ENCODE measurements at regions of chr3 and their contacts with region 1.

Region 1: DNA sequence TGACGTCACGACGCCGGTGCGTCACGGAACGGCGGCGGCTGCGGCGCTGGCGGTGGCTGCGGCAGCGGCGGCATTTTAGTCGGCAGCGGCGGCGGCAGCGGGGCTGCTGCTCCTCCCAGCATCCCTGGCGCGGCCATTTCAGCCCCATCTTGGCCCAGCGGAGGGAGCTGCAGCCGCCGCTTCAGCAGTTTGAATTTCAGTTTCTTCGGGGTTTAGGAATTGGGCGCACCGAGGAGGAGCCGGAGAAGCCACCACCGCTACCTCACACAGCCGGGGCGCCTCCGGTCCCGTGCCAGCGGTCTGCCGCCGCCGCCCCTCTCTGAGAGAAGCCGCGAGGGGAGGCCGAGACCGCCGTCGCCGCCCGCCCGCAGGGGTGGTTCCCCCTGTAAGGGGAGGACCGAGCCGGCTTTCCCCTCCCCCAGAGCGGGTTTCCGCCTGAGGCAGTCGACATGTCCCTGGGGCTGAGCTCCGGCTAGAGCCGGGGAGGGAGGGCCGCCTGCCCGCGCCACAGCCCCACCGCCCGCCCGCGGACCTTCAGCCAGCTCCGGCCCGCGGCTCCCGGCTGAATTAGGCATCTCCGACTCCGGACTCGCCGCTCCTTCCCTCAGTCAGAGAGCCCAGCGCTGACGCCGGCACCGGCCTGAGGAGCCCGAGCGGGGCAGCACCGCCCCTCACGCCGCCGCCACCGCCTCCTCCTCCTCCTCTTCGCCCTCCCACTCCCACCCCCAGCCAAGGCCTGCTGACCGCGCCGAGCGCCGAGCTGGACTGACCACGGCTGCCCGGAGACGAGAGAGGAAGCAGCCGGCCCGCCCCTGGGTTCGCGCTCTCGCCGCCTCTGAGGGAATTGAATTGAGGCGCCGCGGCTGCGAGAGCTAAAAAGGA is at the start of gene TSC22D2:
- DNase-seq: peak; percentile 98
- H3K4me3 ChIP-seq: peak within 1 kb of the TSS; percentile 67 to 93 (median 76)
- H3K27ac ChIP-seq: peak within 1 kb of the TSS; percentile 93 to 100 (median 98)
- H3K4me1 ChIP-seq: peaks cover under 1 to 35% (median 26%) of the 10 kb centered on the region in 4 donors
- H3K27me3 ChIP-seq: no peaks in the 10 kb centered on the region
- CTCF ChIP-seq: peak in 2 of 3 experiments; percentile 1 to 25
- EP300 ChIP-seq: no peak
- POLR2A ChIP-seq: peak; percentile 94
- total RNA-seq, gene TSC22D2: 19.1 to 27.1 (median 21.2) TPM

Region 2: GRCh38 chr3:149969940-149970715 is 438.3 kb before region 1 on chr3:
- intact Hi-C with region 1: loop called (anchors 10 kb)
- DNase-seq: no peak
- H3K4me3 ChIP-seq: peak overlapping the region; percentile 93 to 98 (median 96)
- H3K27ac ChIP-seq: peak overlapping the region; percentile 95 to 98 (median 98)
- H3K4me1 ChIP-seq: peaks cover 14 to 44% (median 40%) of the 10 kb centered on the region in 4 donors
- H3K27me3 ChIP-seq: no peaks in the 10 kb centered on the region
- CTCF ChIP-seq: no peak
- EP300 ChIP-seq: no peak
- POLR2A ChIP-seq: peak; percentile 14

Region 3: DNA sequence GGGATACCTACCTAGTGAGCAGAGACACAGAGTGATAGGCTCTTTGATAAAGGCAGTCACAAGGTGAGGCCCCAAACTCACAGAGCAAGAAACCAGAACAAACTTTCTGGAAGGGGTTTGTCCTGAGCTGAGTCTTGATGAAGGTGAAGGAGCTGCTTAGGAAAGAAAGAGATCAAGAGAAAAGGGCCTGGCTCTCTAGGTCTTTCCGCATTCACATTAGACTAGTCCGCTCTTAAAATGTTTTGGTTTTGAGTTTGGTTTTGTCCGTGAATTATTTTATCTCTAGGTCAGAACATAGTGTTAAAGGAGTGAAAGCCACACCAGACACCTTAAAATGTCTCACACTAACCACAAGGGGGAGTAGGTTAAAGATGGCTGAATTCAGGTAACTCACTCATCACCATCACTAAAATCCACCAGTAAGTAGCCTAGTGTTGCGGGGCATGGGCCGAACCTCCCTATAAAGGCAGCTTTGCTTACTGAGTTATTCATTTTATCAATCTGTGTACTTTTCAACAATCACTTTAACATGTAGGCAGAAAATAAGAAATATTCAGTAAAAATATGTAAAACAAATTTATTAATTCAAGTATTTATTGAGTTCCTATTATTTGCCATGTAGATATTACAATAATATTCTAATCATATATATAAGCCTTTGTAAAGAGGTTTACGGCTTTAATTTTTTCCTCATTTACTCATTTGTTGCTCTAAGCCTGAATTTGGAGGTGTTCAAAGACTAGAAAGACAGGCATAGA is 121.9 kb before region 1 on chr3:
- intact Hi-C with region 1: loop called (anchors 10 kb)
- DNase-seq: no peak
- H3K4me3 ChIP-seq: no peak overlapping the region
- H3K27ac ChIP-seq: no peak overlapping the region
- H3K4me1 ChIP-seq: no peaks in the 10 kb centered on the region
- H3K27me3 ChIP-seq: no peaks in the 10 kb centered on the region
- CTCF ChIP-seq: peak; percentile 41 to 65 (median 58)
- EP300 ChIP-seq: no peak
- POLR2A ChIP-seq: no peak

Region 4: GRCh38 chr3:150469031-150469942 is 60.8 kb after region 1 on chr3:
- intact Hi-C with region 1: loop called (anchors 5 kb)
- DNase-seq: peak; percentile 92
- H3K4me3 ChIP-seq: no peak overlapping the region
- H3K27ac ChIP-seq: peak overlapping the region; percentile 64 to 80 (median 76)
- H3K4me1 ChIP-seq: peaks cover 0 to 15% (median 12%) of the 10 kb centered on the region in 4 donors
- H3K27me3 ChIP-seq: no peaks in the 10 kb centered on the region
- CTCF ChIP-seq: no peak
- EP300 ChIP-seq: no peak
- POLR2A ChIP-seq: no peak

Region 5: GRCh38 chr3:150546226-150547044 is 138.0 kb after region 1 on chr3 and contains the starts of genes EIF2A and SERP1:
- intact Hi-C with region 1: loop called (anchors 2 kb)
- DNase-seq: peak; percentile 99
- H3K4me3 ChIP-seq: peak within 1 kb of the TSS; percentile 72 to 95 (median 91)
- H3K27ac ChIP-seq: peak within 1 kb of the TSS; percentile 97 to 100 (median 98)
- H3K4me1 ChIP-seq: peaks cover 19 to 51% (median 43%) of the 10 kb centered on the region in 4 donors
- H3K27me3 ChIP-seq: no peaks in the 10 kb centered on the region
- CTCF ChIP-seq: peak in 1 of 3 experiments; percentile 3
- EP300 ChIP-seq: no peak
- POLR2A ChIP-seq: peak; percentile 93
- total RNA-seq, gene EIF2A: 113 to 176 (median 154) TPM
- total RNA-seq, gene SERP1: 117 to 177 (median 144) TPM

Measured in esophagus muscularis mucosa (tissue), 4 donors.